PC-9 (cell line): ENCODE measurements at regions of chr19 and their contacts with region 1.

Region 1: DNA sequence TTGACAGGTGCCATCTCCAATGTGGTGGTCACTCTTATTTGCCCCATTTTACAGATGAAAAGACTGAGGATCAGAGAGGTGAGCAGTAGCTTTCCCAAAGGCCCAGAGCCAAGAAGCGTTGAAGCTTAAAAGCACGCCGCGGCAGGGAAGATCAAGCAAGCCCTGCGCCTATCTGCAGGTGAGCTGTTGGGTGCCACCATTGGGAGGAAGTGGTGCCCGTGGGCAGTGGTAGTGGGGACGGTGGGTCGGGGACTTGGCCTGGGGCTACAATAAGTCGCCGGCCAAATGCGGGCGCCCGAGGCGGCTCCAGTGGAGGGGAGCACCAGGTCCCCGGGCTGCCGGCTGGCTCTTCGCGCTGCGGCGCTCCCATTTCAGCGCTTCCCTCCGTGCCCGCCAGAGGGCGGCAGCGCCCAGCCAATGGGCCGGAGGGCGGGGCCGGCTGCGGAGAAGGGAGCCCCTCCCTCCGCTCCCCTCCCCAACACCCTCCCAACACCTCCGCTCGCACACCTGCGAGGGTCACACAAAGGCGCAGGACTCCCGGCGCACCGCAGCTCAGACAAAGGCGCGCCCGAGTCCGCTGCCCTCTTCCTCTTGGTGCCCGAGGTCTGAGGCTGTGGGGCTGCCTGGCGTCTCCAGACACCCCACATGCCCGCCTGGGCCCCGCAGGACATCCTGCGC is 744 bp upstream of the POU2F2 start:
- DNase-seq: peak in 1 of 2 experiments; percentile 83
- H3K4me3 ChIP-seq: peak overlapping the region; percentile 37; the same call in 1 of the 2 replicates
- H3K27ac ChIP-seq: no peak overlapping the region
- H3K4me1 ChIP-seq: no peaks in the 10 kb centered on the region
- H3K27me3 ChIP-seq: peaks cover 6% of the 10 kb centered on the region; the same call in 1 of the 2 replicates
- CTCF ChIP-seq: peak; percentile 97

Region 2: GRCh38 chr19:42143341-42144234 is 10.6 kb after region 1 on chr19:
- CTCF ChIA-PET with region 1: no interaction called
- POLR2A ChIA-PET with region 1: no interaction called
- intact Hi-C with region 1: no loop called
- DNase-seq: peak in 1 of 2 experiments; percentile 26
- H3K4me3 ChIP-seq: no peak overlapping the region
- H3K27ac ChIP-seq: no peak overlapping the region
- H3K4me1 ChIP-seq: no peaks in the 10 kb centered on the region
- H3K27me3 ChIP-seq: peaks cover 36% of the 10 kb centered on the region
- CTCF ChIP-seq: no peak

Region 3: GRCh38 chr19:42184401-42184861 is 51.4 kb after region 1 on chr19:
- CTCF ChIA-PET with region 1: no interaction called
- POLR2A ChIA-PET with region 1: no interaction called
- intact Hi-C with region 1: loop called (anchors 2 kb)
- DNase-seq: peak; percentile 50 to 61
- H3K4me3 ChIP-seq: no peak overlapping the region
- H3K27ac ChIP-seq: no peak overlapping the region
- H3K4me1 ChIP-seq: peaks cover 10% of the 10 kb centered on the region; the same call in 1 of the 2 replicates
- H3K27me3 ChIP-seq: no peaks in the 10 kb centered on the region
- CTCF ChIP-seq: peak; percentile 97

Region 4: GRCh38 chr19:42197375-42197817 is 64.4 kb after region 1 on chr19:
- CTCF ChIA-PET with region 1: no interaction called
- POLR2A ChIA-PET with region 1: no interaction called
- intact Hi-C with region 1: no loop called
- DNase-seq: peak; percentile 38 to 69
- H3K4me3 ChIP-seq: no peak overlapping the region
- H3K27ac ChIP-seq: peak overlapping the region; percentile 24; the same call in 1 of the 2 replicates
- H3K4me1 ChIP-seq: peaks cover 24% of the 10 kb centered on the region
- H3K27me3 ChIP-seq: no peaks in the 10 kb centered on the region
- CTCF ChIP-seq: no peak

Region 5: DNA sequence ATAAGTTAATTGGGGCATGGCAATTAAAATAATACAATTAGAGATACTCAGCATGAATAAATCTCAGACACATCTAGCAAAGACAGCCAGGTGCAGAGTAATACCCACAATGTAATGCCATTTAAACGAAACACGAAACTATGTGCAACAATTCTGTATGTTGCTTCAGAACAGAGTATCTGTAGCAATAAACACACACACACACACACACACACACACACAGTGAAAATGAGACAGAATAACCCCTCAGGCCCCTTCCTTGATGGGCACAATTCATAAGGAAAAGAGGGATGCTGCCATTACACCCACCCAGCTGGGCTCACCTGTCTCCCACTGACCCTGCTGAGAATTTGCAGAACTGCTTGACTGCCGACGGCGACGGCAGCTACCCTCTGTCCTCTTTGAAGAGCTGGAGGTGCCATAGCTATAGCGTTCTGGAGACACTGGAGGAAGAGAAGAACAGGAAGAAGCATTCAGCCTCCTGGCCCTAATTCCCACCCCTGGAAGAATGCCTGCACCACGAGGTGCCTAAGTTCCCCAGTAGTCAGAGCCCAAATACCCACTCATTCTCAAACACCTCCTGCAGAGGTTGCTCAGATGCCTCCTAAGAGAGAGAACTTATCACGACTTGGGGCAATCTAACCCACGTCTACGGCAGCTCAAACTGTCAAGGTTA is 82.0 kb after region 1 on chr19:
- CTCF ChIA-PET with region 1: interaction called, 21 read pairs
- POLR2A ChIA-PET with region 1: no interaction called
- intact Hi-C with region 1: loop called (anchors 5 kb)
- DNase-seq: no peak
- H3K4me3 ChIP-seq: peak overlapping the region; percentile 75; the same call in 1 of the 2 replicates
- H3K27ac ChIP-seq: no peak overlapping the region
- H3K4me1 ChIP-seq: peaks cover 40% of the 10 kb centered on the region
- H3K27me3 ChIP-seq: no peaks in the 10 kb centered on the region
- CTCF ChIP-seq: no peak

Region 6: GRCh38 chr19:42295831-42296525 is 163.0 kb after region 1 on chr19:
- CTCF ChIA-PET with region 1: no interaction called
- POLR2A ChIA-PET with region 1: no interaction called
- intact Hi-C with region 1: loop called (anchors 1 kb)
- DNase-seq: peak; percentile 58 to 86
- H3K4me3 ChIP-seq: no peak overlapping the region
- H3K27ac ChIP-seq: no peak overlapping the region
- H3K4me1 ChIP-seq: no peaks in the 10 kb centered on the region
- H3K27me3 ChIP-seq: no peaks in the 10 kb centered on the region
- CTCF ChIP-seq: peak; percentile 95

Region 7: GRCh38 chr19:42386974-42387707 is 254.2 kb after region 1 on chr19:
- CTCF ChIA-PET with region 1: interaction called, 14 read pairs
- POLR2A ChIA-PET with region 1: no interaction called
- intact Hi-C with region 1: no loop called
- DNase-seq: peak; percentile 69 to 89
- H3K4me3 ChIP-seq: peak overlapping the region; percentile 63
- H3K27ac ChIP-seq: peak overlapping the region; percentile 10; the same call in 1 of the 2 replicates
- H3K4me1 ChIP-seq: peaks cover 17% of the 10 kb centered on the region
- H3K27me3 ChIP-seq: peaks cover 5% of the 10 kb centered on the region; the same call in 1 of the 2 replicates
- CTCF ChIP-seq: peak; percentile 74